WTC11 (cell line): ENCODE measurements at regions of chr13 and their contacts with region 1.

Region 1: DNA sequence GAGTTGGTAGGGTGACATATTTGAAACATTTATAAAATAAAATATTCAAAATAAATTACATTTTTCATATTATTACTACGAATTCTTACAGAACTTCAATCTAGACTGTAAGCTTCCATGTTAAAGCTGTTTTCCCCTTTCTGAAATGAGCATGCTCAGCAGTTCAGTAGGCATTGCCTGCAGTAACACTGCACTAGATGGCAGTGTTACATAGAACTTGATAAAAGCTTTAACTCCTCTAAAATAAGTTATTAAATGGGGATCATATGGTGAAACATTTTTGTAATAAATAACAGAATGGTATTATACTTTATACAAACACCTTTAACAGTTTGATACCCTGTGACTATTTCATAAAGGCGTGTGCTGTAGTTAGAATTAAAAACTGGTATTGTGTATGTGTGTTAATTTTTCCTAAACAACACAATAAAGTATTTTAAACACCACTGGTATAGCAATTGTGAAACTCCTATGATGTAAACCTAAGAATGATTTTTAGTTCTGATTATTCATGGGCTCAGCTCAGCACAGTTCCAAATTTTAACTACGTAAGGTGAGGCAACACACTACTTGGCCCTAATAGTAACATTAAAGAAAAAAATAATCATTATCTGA is 11.6 kb upstream of the GPR18 start:
- DNase-seq: no peak
- ATAC-seq: peak; percentile 50
- H3K4me3 Mint-ChIP-seq: no peak overlapping the region
- H3K27ac Mint-ChIP-seq: no peak overlapping the region
- H3K4me1 Mint-ChIP-seq: no peaks in the 10 kb centered on the region
- H3K27me3 Mint-ChIP-seq: no peaks in the 10 kb centered on the region
- CTCF ChIP-seq: no peak

Region 2: DNA sequence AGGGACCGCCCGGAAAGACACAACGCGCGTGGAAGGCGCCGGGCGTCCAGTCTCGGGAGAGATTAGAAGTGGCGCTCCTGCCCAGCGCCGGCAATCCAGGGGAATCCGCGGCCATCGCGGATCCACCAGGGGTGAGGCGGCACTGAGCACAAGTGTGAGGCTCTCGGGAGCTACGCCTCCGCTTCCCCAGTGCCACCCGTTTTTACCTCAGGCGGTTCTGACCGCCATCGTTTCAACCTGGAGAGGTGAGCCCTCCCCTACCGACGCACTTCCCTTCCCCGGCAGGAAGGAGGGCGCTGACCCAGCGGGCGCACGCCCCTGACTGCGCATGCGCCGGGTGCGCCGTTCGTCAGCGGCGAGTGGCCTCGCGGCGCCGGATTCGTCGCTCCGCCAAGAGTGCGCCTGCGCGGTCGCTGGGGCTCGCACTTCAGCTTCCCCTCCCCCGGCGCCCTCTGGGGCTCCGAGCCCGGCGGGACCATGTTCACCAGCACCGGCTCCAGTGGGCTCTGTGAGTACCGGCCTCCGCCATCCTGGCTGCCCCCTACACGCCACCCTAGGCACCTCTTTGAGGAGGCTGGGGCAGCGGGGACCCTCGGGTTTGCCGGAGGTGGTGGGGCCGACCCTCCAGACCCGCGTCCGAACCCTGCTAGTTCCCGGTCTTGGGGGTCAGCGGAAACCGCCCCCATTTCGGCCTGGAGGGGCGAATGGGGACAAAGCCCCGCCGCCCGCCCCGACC is 69.1 kb before region 1 on chr13 and contains the start of gene UBAC2:
- CTCF ChIA-PET with region 1: interaction called, 21 read pairs
- POLR2A ChIA-PET with region 1: interaction called, 4 read pairs
- DNase-seq: peak; percentile 95
- ATAC-seq: peak; percentile 83
- H3K4me3 Mint-ChIP-seq: peak within 1 kb of the TSS; percentile 92
- H3K27ac Mint-ChIP-seq: peak within 1 kb of the TSS; percentile 97
- H3K4me1 Mint-ChIP-seq: peaks cover 49% of the 10 kb centered on the region
- H3K27me3 Mint-ChIP-seq: no peaks in the 10 kb centered on the region
- CTCF ChIP-seq: no peak
- total RNA-seq, gene UBAC2: 64.7 to 72.4 TPM (median 71.3 TPM) in 3 replicates

Region 3: GRCh38 chr13:99214232-99214631 is 55.5 kb before region 1 on chr13:
- CTCF ChIA-PET with region 1: interaction called, 10 read pairs
- POLR2A ChIA-PET with region 1: no interaction called
- DNase-seq: no peak
- ATAC-seq: peak; percentile 60
- H3K4me3 Mint-ChIP-seq: no peak overlapping the region; the same call in 1 of the 2 replicates
- H3K27ac Mint-ChIP-seq: peak overlapping the region; percentile 71
- H3K4me1 Mint-ChIP-seq: peaks cover 45% of the 10 kb centered on the region
- H3K27me3 Mint-ChIP-seq: no peaks in the 10 kb centered on the region
- CTCF ChIP-seq: no peak

Region 4: DNA sequence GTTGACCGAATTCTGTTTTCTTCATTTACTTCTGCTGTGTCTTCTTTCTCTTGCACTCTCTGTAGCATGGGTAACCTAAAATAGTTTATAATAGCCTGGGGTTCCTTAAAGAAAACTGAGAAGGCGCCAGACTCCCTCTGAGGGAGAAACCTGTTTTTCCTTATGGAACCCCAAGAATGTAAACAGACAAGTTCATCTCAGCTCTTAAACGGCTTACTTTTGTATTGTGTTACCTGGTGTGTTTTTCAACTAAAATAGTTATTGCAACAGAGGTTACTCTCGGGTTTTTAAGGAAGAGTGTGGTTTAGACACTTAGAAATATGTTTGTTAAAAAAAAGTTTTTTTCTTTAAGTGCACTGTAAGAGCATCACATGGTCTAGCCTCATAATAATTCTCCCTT is 207.8 kb after region 1 on chr13:
- CTCF ChIA-PET with region 1: no interaction called
- POLR2A ChIA-PET with region 1: no interaction called
- DNase-seq: no peak
- ATAC-seq: no peak
- H3K4me3 Mint-ChIP-seq: no peak overlapping the region
- H3K27ac Mint-ChIP-seq: peak overlapping the region; percentile 66
- H3K4me1 Mint-ChIP-seq: peaks cover 17% of the 10 kb centered on the region
- H3K27me3 Mint-ChIP-seq: no peaks in the 10 kb centered on the region
- CTCF ChIP-seq: no peak

Region 5: DNA sequence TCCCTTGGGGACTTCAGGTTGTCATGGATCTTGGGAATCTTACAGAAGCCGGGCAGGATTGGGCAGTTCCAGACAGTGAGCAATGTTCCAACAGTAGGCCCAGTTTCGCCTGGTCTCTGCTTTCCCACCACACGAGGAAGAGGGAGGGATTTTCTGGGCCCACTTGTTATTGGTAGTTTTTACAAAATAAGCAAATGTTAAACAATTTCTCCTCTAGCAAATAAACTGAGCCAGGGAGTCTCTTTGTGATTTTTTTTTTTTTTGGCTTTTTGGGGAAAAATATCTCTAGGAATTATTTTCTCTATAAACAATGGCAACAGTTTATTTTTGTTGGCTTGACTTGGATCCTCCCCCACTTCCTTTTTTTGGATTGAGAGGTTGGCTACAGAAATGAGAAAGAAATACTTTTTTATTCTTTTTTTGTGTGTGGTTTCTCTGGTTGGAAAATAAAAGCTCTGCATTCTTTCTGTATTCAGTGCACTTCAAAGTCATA is 320.8 kb after region 1 on chr13:
- CTCF ChIA-PET with region 1: no interaction called
- POLR2A ChIA-PET with region 1: no interaction called
- DNase-seq: no peak
- ATAC-seq: no peak
- H3K4me3 Mint-ChIP-seq: no peak overlapping the region
- H3K27ac Mint-ChIP-seq: no peak overlapping the region; the same call in 1 of the 2 replicates
- H3K4me1 Mint-ChIP-seq: no peaks in the 10 kb centered on the region
- H3K27me3 Mint-ChIP-seq: peaks cover 3% of the 10 kb centered on the region; the same call in 1 of the 2 replicates
- CTCF ChIP-seq: no peak